ENCODE measurements at regions of chr3 and their contacts with region 1.

Region 1: DNA sequence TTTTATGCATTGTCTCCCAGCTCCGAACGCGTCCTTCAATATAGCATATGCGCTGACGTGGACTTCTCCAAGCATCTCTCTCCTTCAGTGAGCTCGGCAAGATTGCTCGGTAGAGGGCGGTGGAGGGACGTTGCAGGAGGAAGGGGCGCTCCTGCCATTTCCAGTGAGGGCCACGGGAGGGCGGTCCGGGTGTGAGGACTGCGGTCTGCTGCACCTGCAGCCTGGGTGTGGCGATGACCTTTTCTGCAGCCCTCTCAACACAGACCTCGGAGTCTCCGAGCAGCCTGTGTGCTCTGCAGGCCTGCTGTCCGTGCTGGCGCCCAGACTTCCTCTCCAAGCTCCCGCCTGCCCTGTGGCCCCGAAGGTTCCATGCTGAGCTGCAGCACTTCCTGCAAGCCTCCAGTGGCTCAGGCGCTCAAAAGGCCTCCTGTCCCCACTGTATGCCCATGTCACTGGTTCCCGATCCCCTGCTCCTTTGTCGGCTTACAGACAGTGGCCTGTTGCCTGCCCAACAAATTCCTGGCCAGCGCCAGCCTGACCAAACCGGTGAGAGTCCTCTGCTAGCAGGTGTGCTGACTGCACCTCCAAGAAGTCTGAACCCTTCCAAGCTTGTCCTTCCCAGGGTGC is 8.9 kb upstream of the RTP3 start:
- DNase-seq: peak; percentile 61
- H3K4me3 ChIP-seq: no peak overlapping the region
- H3K27ac ChIP-seq: no peak overlapping the region
- H3K4me1 ChIP-seq: peaks cover 13% of the 10 kb centered on the region
- H3K27me3 ChIP-seq: no peaks in the 10 kb centered on the region
- CTCF ChIP-seq: peak; percentile 100

Region 2: DNA sequence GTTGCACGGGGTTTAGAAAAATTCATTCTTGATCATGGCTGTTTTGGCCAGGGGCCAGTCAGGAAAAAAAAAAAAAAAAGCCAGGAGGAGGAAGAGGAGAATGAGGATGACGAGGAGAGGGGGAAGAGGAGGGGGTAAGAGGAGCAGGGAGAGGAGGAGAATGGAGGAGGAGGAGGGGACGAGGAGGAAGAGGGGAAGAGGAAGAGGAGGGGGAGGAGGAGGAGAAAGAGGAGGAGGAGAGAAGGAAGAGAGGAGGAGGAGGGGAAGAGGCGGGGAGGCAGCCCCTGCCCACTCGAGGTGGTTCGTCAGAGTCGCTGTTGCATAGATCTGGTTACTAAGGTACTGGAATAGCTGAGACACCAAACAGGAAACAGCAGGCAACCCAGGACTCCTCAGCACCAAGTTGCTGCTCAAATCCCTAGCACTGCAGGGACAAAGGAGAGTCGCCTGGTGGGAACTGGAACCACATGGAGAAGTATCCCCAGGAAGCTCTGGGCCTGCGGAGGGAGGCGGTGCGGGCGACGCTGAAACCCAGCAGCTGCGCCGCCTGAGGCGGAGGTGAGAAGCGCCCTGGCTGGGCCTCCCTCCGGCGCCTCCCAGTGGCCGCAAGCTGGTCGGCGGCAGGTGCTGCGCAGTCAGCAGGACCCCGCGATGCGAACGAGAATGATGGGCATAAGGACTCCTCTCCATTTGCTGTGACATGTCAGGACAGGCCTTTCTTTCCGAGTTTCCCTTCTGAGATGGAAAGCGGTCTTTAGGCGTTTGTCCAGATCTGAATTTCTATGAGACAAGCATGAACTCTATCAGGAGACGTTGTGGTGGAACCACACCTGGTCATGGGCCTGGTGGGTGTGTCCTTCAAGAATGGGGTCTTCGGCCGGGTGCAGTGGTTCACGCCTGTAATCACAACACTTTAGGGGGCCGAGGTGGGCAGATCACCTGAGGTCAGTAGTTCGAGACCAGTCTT is 141.0 kb after region 1 on chr3:
- dilution Hi-C with region 1: loop called (anchors 25 kb)
- DNase-seq: no peak
- H3K4me3 ChIP-seq: peak overlapping the region in 1 of 3 experiments; percentile 6
- H3K27ac ChIP-seq: no peak overlapping the region
- H3K4me1 ChIP-seq: peaks cover 12% of the 10 kb centered on the region
- H3K27me3 ChIP-seq: no peaks in the 10 kb centered on the region
- CTCF ChIP-seq: peak; percentile 94 to 98 (median 96)